Pancreas (tissue), 10 donors: ENCODE measurements at regions of chr9 and their contacts with region 1.

Region 1: GRCh38 chr9:35138682-35139470 is 22.9 kb upstream of the UNC13B start:
- DNase-seq: no peak
- ATAC-seq: no peak
- H3K4me3 ChIP-seq: no peak overlapping the region
- H3K27ac ChIP-seq: no peak overlapping the region
- H3K4me1 ChIP-seq: no peaks in the 10 kb centered on the region
- H3K27me3 ChIP-seq: no peaks in the 10 kb centered on the region
- CTCF ChIP-seq: no peak

Region 2: DNA sequence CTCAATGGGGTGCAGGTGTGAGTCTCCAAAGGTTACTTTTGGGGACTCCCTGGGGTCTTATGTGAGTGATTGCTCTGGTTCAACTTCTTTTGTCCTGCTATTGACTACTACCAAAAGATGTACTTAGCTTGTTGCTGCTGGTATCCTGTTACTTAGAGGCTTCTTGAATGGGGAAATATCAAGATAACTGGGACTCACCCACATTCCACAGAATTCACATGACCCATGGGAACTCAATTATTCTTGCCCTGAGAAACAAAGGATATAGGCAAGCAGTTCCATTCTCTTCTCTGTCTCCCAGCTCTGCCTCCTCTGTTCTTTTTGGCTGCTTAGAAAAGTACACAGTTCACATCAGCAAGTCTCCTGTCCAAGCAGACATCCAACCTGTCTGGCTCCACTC is 128.8 kb after region 1 on chr9:
- intact Hi-C with region 1: loop called in 1 of 3 experiments (anchors 10 kb)
- DNase-seq: no peak
- ATAC-seq: no peak
- H3K4me3 ChIP-seq: no peak overlapping the region
- H3K27ac ChIP-seq: no peak overlapping the region
- H3K4me1 ChIP-seq: no peaks in the 10 kb centered on the region
- H3K27me3 ChIP-seq: no peaks in the 10 kb centered on the region
- CTCF ChIP-seq: no peak